Mammary epithelial cell (primary cell): ENCODE measurements at regions of chr19 and their contacts with region 1.

Region 1: DNA sequence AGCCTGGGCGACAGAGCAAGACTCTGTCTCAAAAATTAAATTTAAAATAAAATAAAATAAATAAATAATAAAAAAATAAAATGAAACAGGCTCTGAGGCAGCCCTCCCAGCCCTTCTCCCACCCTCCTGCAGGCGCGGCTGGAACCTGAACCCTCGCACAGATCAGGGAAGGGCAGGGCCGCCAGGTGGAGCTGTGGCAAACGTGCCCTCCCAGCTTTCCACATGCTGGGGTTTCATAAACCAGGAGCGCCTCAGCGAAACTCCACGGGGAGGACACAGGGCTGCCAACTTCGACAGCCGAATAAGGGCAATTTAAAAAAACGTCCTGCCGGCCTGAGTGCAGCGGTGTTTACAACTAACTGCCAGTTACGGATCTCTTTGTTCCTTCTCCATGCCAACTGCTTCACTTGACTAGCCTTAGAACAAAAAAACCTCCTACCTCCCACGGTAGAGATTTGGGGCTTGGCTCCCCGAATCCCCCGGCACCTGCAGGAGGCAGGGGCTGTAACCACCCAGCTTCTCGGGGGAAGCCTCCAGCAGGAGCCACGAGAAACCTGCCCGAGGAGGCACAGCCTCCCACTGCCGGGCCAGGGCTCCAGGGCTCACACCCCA is 15.9 kb downstream of the ZNF787 start:
- DNase-seq: peak; percentile 71
- H3K4me3 ChIP-seq: no peak overlapping the region
- H3K27ac ChIP-seq: peak overlapping the region; percentile 27
- H3K4me1 ChIP-seq: peaks cover 31% of the 10 kb centered on the region
- H3K27me3 ChIP-seq: no peaks in the 10 kb centered on the region
- CTCF ChIP-seq: peak; percentile 70 to 90

Region 2: GRCh38 chr19:56014765-56015164 is 90.4 kb before region 1 on chr19:
- CTCF ChIA-PET with region 1: no interaction called
- dilution Hi-C with region 1: no loop called
- in situ Hi-C with region 1: no loop called
- intact Hi-C with region 1: no loop called
- DNase-seq: no peak
- H3K4me3 ChIP-seq: no peak overlapping the region
- H3K27ac ChIP-seq: no peak overlapping the region
- H3K4me1 ChIP-seq: no peaks in the 10 kb centered on the region
- H3K27me3 ChIP-seq: no peaks in the 10 kb centered on the region
- CTCF ChIP-seq: no peak

Region 3: DNA sequence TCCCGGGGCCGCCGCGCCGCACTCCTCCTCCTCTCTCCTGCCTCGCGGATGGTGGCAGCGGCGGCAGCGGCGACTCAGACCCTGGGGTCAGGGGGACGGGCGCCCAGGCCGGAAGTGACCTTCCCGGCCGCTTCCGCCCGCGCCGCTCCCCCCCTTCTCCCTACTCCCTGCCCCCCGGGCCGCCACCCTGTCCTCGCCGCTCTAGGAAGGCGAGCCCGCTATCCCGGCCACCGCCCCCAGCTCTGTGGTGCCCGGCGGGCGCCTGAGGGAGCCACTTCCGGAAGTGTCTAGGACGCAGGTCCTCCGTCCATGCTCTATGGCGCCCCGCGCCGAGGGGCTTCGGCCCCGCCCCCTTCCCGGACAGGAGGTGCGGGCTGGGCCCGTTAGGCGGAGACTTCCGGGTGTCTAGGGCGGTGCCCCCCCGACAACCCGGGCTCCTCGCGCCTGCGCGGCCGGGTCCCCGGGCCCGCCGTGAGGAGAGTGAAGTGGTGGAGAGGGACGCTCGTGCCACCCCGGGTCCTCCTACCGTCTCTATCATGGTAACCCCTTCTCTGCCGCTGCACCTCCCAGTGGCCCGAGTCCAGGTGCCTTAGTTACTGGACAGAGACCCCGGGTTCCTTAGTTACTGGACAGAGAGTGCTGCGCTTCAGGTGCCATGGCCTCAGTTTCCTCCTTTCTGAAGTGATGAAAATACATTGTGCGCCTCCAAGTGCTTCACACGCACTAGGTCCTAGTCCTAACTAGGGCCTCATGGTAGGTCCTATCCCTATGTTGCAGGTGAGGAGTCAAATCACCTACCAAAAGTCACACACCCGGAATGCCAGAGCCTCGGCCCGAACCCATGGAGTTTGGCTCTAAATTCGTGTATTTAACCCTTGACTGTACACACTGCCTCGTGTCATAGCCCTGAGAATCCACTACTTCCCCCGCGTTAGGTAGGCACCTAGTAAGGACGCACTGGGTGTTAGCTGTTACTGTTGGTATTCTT is 16.3 kb after region 1 on chr19 and contains the start of gene ZNF787:
- CTCF ChIA-PET with region 1: no interaction called
- dilution Hi-C with region 1: no loop called
- in situ Hi-C with region 1: no loop called
- intact Hi-C with region 1: loop called (anchors 2 kb)
- DNase-seq: peak; percentile 97
- H3K4me3 ChIP-seq: peak within 1 kb of the TSS; percentile 76 to 83 (median 81)
- H3K27ac ChIP-seq: peak within 1 kb of the TSS; percentile 78
- H3K4me1 ChIP-seq: peaks cover 14% of the 10 kb centered on the region
- H3K27me3 ChIP-seq: no peaks in the 10 kb centered on the region
- CTCF ChIP-seq: no peak
- total RNA-seq, gene ZNF787: 25.5 to 41.0 TPM

Region 4: DNA sequence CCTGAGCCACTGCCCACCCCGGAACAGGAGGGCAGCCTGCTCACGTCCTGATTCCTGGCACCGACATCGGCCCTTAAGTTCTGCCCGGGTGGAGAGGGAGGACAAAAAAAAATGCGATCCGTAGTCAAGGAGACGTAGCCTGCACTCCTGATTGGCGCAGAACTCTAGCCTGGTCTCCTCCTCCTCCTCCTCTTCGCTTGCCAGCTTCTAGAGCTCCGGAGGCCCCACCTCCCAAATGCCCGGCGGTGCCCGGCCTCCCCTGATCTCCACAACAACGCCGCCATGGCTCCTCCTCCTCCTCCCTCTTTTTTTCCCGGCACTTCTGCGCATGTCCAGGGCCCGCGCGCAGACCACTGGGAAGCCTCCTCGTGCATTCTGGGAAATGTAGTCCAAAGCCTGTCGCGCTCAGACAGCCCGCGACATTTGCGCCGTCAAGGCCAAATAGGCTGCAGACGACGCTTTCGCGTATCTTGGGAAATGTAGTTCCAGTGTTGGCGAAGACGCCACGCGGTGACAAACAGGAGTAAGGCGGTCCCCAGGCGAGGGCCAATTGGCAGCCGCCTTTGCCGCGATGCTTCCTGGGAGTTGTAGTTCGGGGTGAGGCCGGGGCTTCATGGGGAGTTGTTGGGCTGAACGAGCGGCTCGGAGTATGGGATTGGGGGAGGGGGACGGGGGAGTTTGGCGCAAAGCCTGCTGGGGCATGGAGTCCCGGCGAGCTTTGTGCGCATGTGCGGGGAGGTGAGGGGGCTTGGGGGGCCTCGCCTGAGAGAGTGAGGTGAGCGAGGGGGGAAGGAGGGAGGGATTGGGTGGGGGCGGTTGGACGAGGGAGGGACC is 35.6 kb after region 1 on chr19 and contains the start of gene ZNF444:
- CTCF ChIA-PET with region 1: no interaction called
- dilution Hi-C with region 1: no loop called
- in situ Hi-C with region 1: no loop called
- intact Hi-C with region 1: loop called (anchors 1 kb)
- DNase-seq: peak; percentile 98
- H3K4me3 ChIP-seq: peak within 1 kb of the TSS; percentile 59 to 73 (median 63)
- H3K27ac ChIP-seq: peak within 1 kb of the TSS; percentile 77
- H3K4me1 ChIP-seq: peaks cover 17% of the 10 kb centered on the region
- H3K27me3 ChIP-seq: no peaks in the 10 kb centered on the region
- CTCF ChIP-seq: no peak
- total RNA-seq, gene ZNF444: 12.7 to 29.0 TPM

Region 5: DNA sequence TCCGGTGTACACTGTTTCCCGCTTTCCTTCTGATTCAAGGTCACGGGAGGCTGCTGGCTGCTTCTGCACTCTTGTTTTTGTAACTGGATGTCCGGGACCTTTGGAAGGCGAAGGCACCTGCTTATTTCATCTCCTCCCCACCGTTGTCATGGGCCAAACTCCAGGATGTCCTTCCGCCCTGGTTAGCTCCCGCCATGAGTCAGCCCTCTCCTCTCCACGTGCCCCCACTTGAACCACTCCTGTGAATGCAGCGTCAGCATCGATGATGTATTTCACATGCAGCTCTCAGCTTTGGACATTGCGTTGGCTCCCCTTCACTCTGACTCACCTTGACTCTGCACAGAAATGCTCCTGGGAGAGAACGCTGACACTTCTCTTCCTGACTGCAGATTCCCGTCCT is 65.1 kb after region 1 on chr19:
- CTCF ChIA-PET with region 1: interaction called, 3 read pairs
- dilution Hi-C with region 1: no loop called
- in situ Hi-C with region 1: no loop called
- intact Hi-C with region 1: loop called (anchors 1 kb)
- DNase-seq: peak; percentile 75
- H3K4me3 ChIP-seq: no peak overlapping the region
- H3K27ac ChIP-seq: no peak overlapping the region
- H3K4me1 ChIP-seq: no peaks in the 10 kb centered on the region
- H3K27me3 ChIP-seq: no peaks in the 10 kb centered on the region
- CTCF ChIP-seq: no peak